Head of caudate nucleus (tissue), 42 donors: ENCODE measurements at regions of chr13 and their contacts with region 1.

Region 1: GRCh38 chr13:45102136-45102507 is 18.2 kb upstream of the GTF2F2 start:
- DNase-seq: peak in 39 of 42 donors; percentile 2 to 84 (median 49)

Region 2: GRCh38 chr13:45004096-45004495 is 98.0 kb before region 1 on chr13:
- intact Hi-C with region 1: no loop called
- DNase-seq: no peak

Region 3: GRCh38 chr13:45034342-45034741 is 67.8 kb before region 1 on chr13:
- intact Hi-C with region 1: no loop called
- DNase-seq: no peak

Region 4: GRCh38 chr13:45119991-45120864 is 18.1 kb after region 1 on chr13 and contains the start of gene GTF2F2:
- intact Hi-C with region 1: loop called (anchors 2 kb)
- DNase-seq: peak; percentile 68 to 94 (median 86)

Region 5: DNA sequence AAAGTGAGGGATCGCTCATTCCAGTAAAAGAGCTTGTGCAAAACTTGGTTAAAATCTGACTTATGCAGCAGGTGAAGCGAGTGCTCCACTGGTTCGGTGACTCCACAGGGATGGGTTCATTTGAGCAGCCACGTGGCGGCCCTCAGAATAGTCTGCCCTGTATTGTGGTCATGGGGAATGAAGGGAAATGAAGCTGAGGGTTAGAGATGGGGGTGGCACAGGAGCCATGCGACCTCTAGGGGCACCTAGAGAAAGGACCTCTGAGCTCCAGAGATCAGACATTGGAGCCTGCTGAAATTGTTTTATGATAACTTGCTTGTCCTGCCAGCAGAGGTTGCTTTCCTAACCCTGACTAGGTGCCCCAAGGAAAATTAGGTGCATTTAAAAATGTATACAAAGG is 626.6 kb after region 1 on chr13:
- intact Hi-C with region 1: no loop called
- DNase-seq: no peak